GM23248 (cell line): ENCODE measurements at regions of chr9 and their contacts with region 1.

Region 1: DNA sequence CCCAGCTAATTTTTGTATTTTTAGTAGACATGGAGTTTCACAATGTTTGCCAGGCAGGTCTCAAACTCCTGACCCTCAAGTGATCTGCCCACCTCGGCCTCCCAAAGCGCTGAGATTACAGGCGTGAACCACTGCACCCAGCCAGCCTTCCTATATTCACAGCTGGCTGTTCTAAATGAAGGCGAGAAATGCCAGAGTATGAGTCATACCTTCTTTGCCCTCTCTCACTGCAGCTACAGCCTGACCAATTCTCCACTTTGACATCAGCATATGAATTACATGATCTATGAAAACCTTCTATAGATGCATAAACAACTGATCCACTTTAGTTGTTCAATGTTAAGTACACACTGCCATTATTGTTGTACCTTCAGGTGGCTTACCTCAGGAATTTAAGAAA is 14.5 kb downstream of the APTX start:
- DNase-seq: peak; percentile 37
- H3K4me3 ChIP-seq: no peak overlapping the region
- H3K27ac ChIP-seq: no peak overlapping the region
- H3K4me1 ChIP-seq: no peaks in the 10 kb centered on the region
- H3K27me3 ChIP-seq: no peaks in the 10 kb centered on the region

Region 2: GRCh38 chr9:32764140-32764539 is 222.8 kb before region 1 on chr9:
- in situ Hi-C with region 1: no loop called
- DNase-seq: no peak
- H3K4me3 ChIP-seq: no peak overlapping the region
- H3K27ac ChIP-seq: no peak overlapping the region
- H3K4me1 ChIP-seq: no peaks in the 10 kb centered on the region
- H3K27me3 ChIP-seq: 0 out of 2 replicates have a peak, but pooled peaks cover 5% of the 10 kb centered on the region

Region 3: GRCh38 chr9:33044127-33044673 is 57.2 kb after region 1 on chr9:
- in situ Hi-C with region 1: loop called (anchors 10 kb)
- DNase-seq: peak; percentile 97
- H3K4me3 ChIP-seq: peak overlapping the region; percentile 69
- H3K27ac ChIP-seq: peak overlapping the region; percentile 66
- H3K4me1 ChIP-seq: peaks cover 14% of the 10 kb centered on the region
- H3K27me3 ChIP-seq: no peaks in the 10 kb centered on the region

Region 4: DNA sequence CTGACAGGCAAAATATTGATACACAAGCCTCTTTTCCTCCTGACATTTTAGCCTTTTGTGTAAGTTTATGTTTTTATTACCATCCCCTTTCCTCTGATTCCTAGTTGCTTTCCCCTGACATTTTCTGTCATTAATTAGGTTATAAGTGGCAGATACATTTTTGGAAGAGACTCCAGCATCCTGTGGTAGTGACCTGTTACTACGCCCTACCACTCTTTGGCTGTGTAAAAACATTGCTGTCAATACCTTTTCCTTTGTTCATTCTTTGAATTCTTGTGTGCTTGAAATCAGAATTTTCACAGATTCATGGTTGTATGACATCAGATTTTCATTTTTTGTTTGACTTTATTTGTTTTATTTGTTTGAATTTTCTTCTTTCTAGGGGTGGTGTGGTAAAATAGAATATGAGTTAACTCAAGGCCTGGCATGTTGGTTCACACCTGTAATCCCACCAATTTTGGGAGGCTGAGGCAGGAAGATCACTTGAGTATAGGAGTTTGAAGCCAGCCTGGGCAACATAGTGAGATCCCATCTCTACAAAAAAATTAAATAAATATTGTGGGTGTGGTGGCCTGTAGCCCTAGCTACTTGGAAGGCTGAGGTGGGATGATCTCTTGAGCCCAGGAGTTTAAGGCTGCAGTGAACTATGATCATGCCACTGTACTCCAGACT is 873.4 kb after region 1 on chr9:
- in situ Hi-C with region 1: no loop called
- DNase-seq: peak; percentile 21
- H3K4me3 ChIP-seq: no peak overlapping the region
- H3K27ac ChIP-seq: 0 out of 2 replicates have a peak overlapping the region, but pooled peaks have one; percentile 38
- H3K4me1 ChIP-seq: peaks cover 14% of the 10 kb centered on the region
- H3K27me3 ChIP-seq: no peaks in the 10 kb centered on the region